PC-3 (cell line): ENCODE measurements at regions of chr5 and their contacts with region 1.

Region 1: DNA sequence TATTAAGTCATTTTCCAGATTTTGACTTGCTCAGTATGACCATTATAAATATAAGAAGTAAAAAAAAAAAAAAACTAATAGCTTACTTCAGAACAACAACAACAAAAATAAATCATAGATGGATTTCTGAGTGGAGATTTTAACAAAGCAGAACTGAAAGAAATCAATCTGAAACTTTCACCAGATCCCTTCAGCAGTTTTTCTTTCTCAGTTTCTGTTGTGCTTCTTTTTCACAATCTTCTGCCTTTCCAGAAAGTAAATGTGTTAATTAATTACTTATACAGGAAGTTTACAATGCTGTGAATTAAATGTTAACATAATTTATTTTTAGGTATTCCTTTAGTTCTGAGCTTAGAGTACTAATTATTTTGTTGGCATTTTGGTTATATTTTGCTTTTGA is 73.5 kb downstream of the CHSY3 start:
- DNase-seq: no peak
- ATAC-seq: no peak
- H3K4me3 ChIP-seq: no peak overlapping the region
- H3K27ac ChIP-seq: no peak overlapping the region
- H3K4me1 ChIP-seq: no peaks in the 10 kb centered on the region
- H3K27me3 ChIP-seq: no peaks in the 10 kb centered on the region
- CTCF ChIP-seq: no peak

Region 2: GRCh38 chr5:129945774-129946270 is 32.0 kb before region 1 on chr5:
- CTCF ChIA-PET with region 1: no interaction called
- POLR2A ChIA-PET with region 1: no interaction called
- intact Hi-C with region 1: loop called (anchors 2 kb)
- DNase-seq: no peak
- ATAC-seq: peak; percentile 33; the same call in 1 of the 2 replicates
- H3K4me3 ChIP-seq: no peak overlapping the region
- H3K27ac ChIP-seq: no peak overlapping the region
- H3K4me1 ChIP-seq: no peaks in the 10 kb centered on the region
- H3K27me3 ChIP-seq: no peaks in the 10 kb centered on the region
- CTCF ChIP-seq: no peak

Region 3: DNA sequence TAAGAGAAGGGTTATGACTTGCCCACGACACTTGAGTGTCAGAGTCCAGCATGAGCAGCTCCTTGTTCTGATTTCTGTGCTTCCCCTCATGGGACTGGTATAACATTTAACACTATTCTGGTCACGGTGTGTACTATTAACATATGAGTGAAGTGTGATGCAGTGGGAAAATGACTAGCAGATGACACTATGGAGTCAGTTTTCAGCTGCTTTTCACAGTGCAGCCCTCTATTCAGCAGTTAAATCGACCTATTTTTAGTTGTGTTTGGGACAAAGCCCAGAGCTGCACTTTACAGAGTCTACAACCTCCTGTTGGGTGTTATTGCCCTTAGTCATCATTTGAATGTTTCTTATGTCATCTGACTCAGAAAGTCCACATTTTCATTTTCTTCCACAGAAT is 14.5 kb before region 1 on chr5:
- CTCF ChIA-PET with region 1: no interaction called
- POLR2A ChIA-PET with region 1: no interaction called
- intact Hi-C with region 1: no loop called
- DNase-seq: peak; percentile 60
- ATAC-seq: peak; percentile 94
- H3K4me3 ChIP-seq: no peak overlapping the region
- H3K27ac ChIP-seq: peak overlapping the region; percentile 66
- H3K4me1 ChIP-seq: peaks cover 9% of the 10 kb centered on the region; the same call in 1 of the 2 replicates
- H3K27me3 ChIP-seq: no peaks in the 10 kb centered on the region
- CTCF ChIP-seq: no peak

Region 4: DNA sequence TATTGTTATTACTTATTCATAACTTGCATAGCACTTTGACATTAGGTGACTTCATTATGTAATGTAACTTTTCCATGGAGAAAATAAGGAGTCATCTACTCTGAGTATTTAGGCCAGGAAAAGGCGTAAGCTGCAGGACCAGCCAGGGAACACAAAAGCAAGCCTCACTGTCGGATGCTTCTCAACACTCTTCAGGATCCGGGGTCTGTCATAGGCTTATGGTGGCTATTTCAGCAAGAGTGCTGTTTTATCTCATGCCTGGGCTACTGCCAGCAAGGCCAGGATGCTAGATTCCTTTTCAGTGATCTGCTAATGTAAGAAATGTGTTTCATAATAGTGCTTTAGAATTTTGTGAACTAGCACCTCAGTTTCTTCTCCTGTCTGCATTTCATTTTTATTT is 88.8 kb after region 1 on chr5:
- CTCF ChIA-PET with region 1: no interaction called
- POLR2A ChIA-PET with region 1: no interaction called
- intact Hi-C with region 1: no loop called
- DNase-seq: no peak
- ATAC-seq: no peak
- H3K4me3 ChIP-seq: no peak overlapping the region
- H3K27ac ChIP-seq: no peak overlapping the region
- H3K4me1 ChIP-seq: peaks cover 4% of the 10 kb centered on the region; the same call in 1 of the 2 replicates
- H3K27me3 ChIP-seq: no peaks in the 10 kb centered on the region
- CTCF ChIP-seq: no peak

Region 5: DNA sequence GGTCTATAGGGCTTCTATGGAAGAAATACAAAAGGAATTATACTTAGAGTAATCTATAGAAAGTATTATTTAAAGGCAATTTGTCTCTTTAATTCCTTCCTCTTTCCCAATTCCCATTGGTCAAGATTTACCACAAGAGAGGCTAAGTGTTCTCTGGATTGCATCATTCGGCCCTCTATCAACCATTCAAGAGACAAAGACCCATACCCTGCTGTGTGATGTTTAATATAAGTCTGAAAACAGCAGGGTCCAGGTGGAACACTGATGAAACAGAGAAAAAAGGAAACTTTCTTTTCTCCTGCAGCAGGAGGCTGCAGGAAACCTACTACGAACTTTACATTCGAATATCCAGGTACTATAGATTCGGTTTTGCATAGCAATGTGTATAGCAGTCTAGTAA is 249.9 kb after region 1 on chr5:
- CTCF ChIA-PET with region 1: no interaction called
- POLR2A ChIA-PET with region 1: no interaction called
- intact Hi-C with region 1: no loop called
- DNase-seq: no peak
- ATAC-seq: no peak
- H3K4me3 ChIP-seq: no peak overlapping the region
- H3K27ac ChIP-seq: no peak overlapping the region
- H3K4me1 ChIP-seq: no peaks in the 10 kb centered on the region
- H3K27me3 ChIP-seq: no peaks in the 10 kb centered on the region
- CTCF ChIP-seq: no peak

Region 6: DNA sequence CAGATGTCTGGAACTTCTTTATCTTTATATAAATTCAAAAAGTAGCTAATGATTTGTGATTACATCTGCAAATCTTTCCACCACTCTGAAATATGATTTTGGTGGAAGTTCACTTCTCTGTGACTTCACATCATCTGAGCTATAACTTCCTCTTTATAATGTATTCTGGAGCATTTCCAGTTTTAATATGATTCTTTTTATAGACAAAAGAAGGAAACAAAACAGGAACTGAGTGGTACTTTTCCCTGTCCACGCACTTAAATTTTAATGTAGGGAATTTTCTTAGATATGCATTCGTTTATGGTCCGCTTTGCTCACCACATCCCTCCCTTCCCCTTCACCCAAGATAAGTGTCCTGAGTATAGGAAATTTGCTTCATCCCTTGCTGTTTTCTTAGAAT is 259.9 kb after region 1 on chr5:
- CTCF ChIA-PET with region 1: no interaction called
- POLR2A ChIA-PET with region 1: no interaction called
- intact Hi-C with region 1: no loop called
- DNase-seq: no peak
- ATAC-seq: no peak
- H3K4me3 ChIP-seq: no peak overlapping the region
- H3K27ac ChIP-seq: no peak overlapping the region
- H3K4me1 ChIP-seq: no peaks in the 10 kb centered on the region
- H3K27me3 ChIP-seq: no peaks in the 10 kb centered on the region
- CTCF ChIP-seq: no peak